Activated CD4-positive, alpha-beta T cell treated with anti-CD3 and anti-CD28 coated beads, Interleukin-2, amount 10 ng/mL, durations not matched to agents 24 days and 14 days (primary cell): ENCODE measurements at regions of chr7 and their contacts with region 1.

Region 1: GRCh38 chr7:32206987-32207386 is 136.8 kb upstream of the PDE1C start:
- DNase-seq: peak; percentile 24
- H3K4me3 Mint-ChIP-seq: no peak overlapping the region
- H3K27ac Mint-ChIP-seq: no peak overlapping the region
- H3K4me1 Mint-ChIP-seq: no peaks in the 10 kb centered on the region
- H3K27me3 Mint-ChIP-seq: no peaks in the 10 kb centered on the region

Region 2: GRCh38 chr7:32126843-32127242 is 80.1 kb before region 1 on chr7:
- intact Hi-C with region 1: no loop called
- DNase-seq: no peak
- H3K4me3 Mint-ChIP-seq: no peak overlapping the region
- H3K27ac Mint-ChIP-seq: no peak overlapping the region
- H3K4me1 Mint-ChIP-seq: no peaks in the 10 kb centered on the region
- H3K27me3 Mint-ChIP-seq: no peaks in the 10 kb centered on the region

Region 3: DNA sequence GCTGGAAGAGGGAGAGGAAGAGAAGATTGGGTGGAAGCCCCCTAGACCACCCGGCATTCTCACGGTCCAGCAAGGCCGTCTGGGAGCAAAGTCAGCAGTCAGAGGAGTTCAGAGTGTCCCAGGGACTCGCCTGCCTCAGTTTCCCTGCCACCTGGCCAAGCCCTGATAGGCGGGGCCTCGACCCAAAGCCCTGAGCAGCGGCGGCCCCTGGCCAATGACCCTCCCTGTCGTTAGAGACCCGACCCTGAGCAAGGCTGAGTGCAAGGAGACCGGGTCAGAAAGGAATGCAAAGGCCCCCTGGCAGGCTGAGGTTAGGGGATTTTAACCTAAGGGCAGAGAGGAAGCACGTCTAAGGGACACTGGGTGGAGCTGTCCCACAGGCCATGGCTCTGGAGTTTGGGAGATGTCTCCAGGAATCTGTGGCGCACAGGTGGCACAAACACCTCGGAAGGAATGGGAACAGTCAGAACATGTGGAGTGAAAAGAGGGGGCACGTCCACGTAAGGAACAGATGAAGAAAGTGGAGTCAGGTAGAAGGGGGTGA is 60.0 kb after region 1 on chr7:
- intact Hi-C with region 1: no loop called
- DNase-seq: no peak
- H3K4me3 Mint-ChIP-seq: no peak overlapping the region
- H3K27ac Mint-ChIP-seq: no peak overlapping the region
- H3K4me1 Mint-ChIP-seq: no peaks in the 10 kb centered on the region
- H3K27me3 Mint-ChIP-seq: no peaks in the 10 kb centered on the region

Region 4: DNA sequence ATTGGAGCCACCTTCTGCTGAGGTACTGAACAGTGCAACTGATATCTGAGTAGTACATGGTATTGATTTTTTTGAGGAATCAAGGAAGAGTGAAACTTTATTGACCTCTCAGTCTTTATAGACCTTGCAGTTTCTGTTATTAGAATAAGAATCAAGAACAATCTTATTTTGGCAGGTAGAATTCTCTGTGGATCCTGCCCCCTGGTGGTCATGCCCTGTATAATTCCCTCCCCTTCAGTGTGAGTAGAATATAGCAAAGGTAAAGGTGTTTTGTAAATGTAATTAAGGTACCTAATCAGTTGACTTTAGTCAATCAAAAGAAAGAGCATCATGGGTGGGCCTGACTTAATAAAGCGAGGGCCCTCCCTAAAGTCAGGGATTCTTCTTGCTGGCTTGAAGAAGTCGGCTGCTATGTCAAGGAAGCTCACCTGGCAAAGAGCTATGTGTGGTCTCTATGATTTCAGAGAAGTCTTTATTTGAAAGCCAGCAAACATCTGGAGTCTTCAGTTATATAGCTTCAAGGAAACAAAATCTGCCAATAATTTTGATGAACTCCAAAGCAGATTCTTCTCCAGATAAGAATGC is 140.3 kb after region 1 on chr7:
- intact Hi-C with region 1: loop called (anchors 2 kb)
- DNase-seq: peak; percentile 73
- H3K4me3 Mint-ChIP-seq: no peak overlapping the region
- H3K27ac Mint-ChIP-seq: no peak overlapping the region
- H3K4me1 Mint-ChIP-seq: no peaks in the 10 kb centered on the region
- H3K27me3 Mint-ChIP-seq: no peaks in the 10 kb centered on the region